Heart left ventricle (tissue), 16 donors: ENCODE measurements at regions of chr12 and their contacts with region 1.

Region 1: GRCh38 chr12:125402874-125403789 is 337.9 kb downstream of the AACS start:
- DNase-seq: no peak
- ATAC-seq: no peak
- H3K4me3 ChIP-seq: no peak overlapping the region
- H3K27ac ChIP-seq: no peak overlapping the region
- H3K4me1 ChIP-seq: no peaks in the 10 kb centered on the region
- H3K27me3 ChIP-seq: peaks cover 0 to 25% (median 0%) of the 10 kb centered on the region in 9 donors
- CTCF ChIP-seq: peak; percentile 30 to 66 (median 58)
- POLR2A ChIP-seq: no peak

Region 2: GRCh38 chr12:125092872-125093680 is 310.1 kb before region 1 on chr12:
- intact Hi-C with region 1: loop called in 1 of 10 experiments (anchors 10 kb)
- DNase-seq: peak in 3 of 5 donors; percentile 28 to 78 (median 77)
- ATAC-seq: peak; percentile 48 to 84 (median 78)
- H3K4me3 ChIP-seq: no peak overlapping the region
- H3K27ac ChIP-seq: peak overlapping the region in 5 of 12 donors; percentile 17 to 54 (median 27)
- H3K4me1 ChIP-seq: peaks cover 0 to 7% (median 0%) of the 10 kb centered on the region in 12 donors
- H3K27me3 ChIP-seq: no peaks in the 10 kb centered on the region
- CTCF ChIP-seq: peak in 7 of 12 donors; percentile 12 to 39 (median 26)
- POLR2A ChIP-seq: no peak

Region 3: GRCh38 chr12:125330645-125331341 is 72.3 kb before region 1 on chr12:
- intact Hi-C with region 1: loop called (anchors 1 to 5 kb)
- DNase-seq: peak; percentile 54 to 85 (median 61)
- ATAC-seq: peak; percentile 51 to 98 (median 90)
- H3K4me3 ChIP-seq: peak overlapping the region; percentile 11 to 59 (median 44)
- H3K27ac ChIP-seq: peak overlapping the region in 1 of 12 donors; percentile 32
- H3K4me1 ChIP-seq: peaks cover 0 to 11% (median 3%) of the 10 kb centered on the region in 12 donors
- H3K27me3 ChIP-seq: peaks cover 0 to 47% (median 17%) of the 10 kb centered on the region in 9 donors
- CTCF ChIP-seq: peak; percentile 70 to 95 (median 91)
- POLR2A ChIP-seq: no peak